Gastrocnemius medialis (tissue), 4 donors: ENCODE measurements at regions of chr1 and their contacts with region 1.

Region 1: GRCh38 chr1:210239349-210240111 is 6.9 kb downstream of the SERTAD4 start:
- DNase-seq: no peak
- ATAC-seq: no peak
- H3K4me3 ChIP-seq: no peak overlapping the region
- H3K27ac ChIP-seq: no peak overlapping the region
- H3K4me1 ChIP-seq: no peaks in the 10 kb centered on the region
- H3K27me3 ChIP-seq: peaks cover 0 to 9% (median 7%) of the 10 kb centered on the region in 3 donors
- CTCF ChIP-seq: peak in 3 of 5 experiments; percentile 12 to 27 (median 16)
- POLR2A ChIP-seq: no peak

Region 2: GRCh38 chr1:210251680-210252490 is 12.4 kb after region 1 on chr1:
- in situ Hi-C with region 1: no loop called
- intact Hi-C with region 1: no loop called
- DNase-seq: no peak
- ATAC-seq: peak in 1 of 2 donors; percentile 51
- H3K4me3 ChIP-seq: peak overlapping the region; percentile 43 to 59 (median 52)
- H3K27ac ChIP-seq: no peak overlapping the region
- H3K4me1 ChIP-seq: peaks cover 6 to 12% of the 10 kb centered on the region in 2 donors
- H3K27me3 ChIP-seq: peaks cover 0 to 17% (median 0%) of the 10 kb centered on the region in 3 donors
- CTCF ChIP-seq: no peak
- POLR2A ChIP-seq: no peak

Region 3: GRCh38 chr1:210292231-210292871 is 52.8 kb after region 1 on chr1:
- in situ Hi-C with region 1: no loop called
- intact Hi-C with region 1: loop called (anchors 5 kb)
- DNase-seq: peak; percentile 38 to 61
- ATAC-seq: peak; percentile 78 to 85
- H3K4me3 ChIP-seq: peak overlapping the region; percentile 52 to 72 (median 61)
- H3K27ac ChIP-seq: peak overlapping the region; percentile 40 to 76 (median 57)
- H3K4me1 ChIP-seq: peaks cover 12 to 28% of the 10 kb centered on the region in 2 donors
- H3K27me3 ChIP-seq: no peaks in the 10 kb centered on the region
- CTCF ChIP-seq: peak in 4 of 5 experiments; percentile 27 to 58 (median 45)
- POLR2A ChIP-seq: no peak

Region 4: GRCh38 chr1:210715072-210715471 is 475.5 kb after region 1 on chr1:
- in situ Hi-C with region 1: no loop called
- intact Hi-C with region 1: no loop called
- DNase-seq: no peak
- ATAC-seq: no peak
- H3K4me3 ChIP-seq: no peak overlapping the region
- H3K27ac ChIP-seq: no peak overlapping the region
- H3K4me1 ChIP-seq: no peaks in the 10 kb centered on the region
- H3K27me3 ChIP-seq: no peaks in the 10 kb centered on the region
- CTCF ChIP-seq: no peak
- POLR2A ChIP-seq: no peak